ENCODE measurements at regions of chr15 and their contacts with region 1.

Region 1: GRCh38 chr15:91706322-91707032 is 147.0 kb upstream of the SLCO3A1 start:
- DNase-seq: peak; percentile 63 to 79
- ATAC-seq: peak; percentile 75 to 92; a peak in 5 of 6 replicates
- H3K4me3 ChIP-seq: no peak overlapping the region
- H3K27ac ChIP-seq: no peak overlapping the region
- H3K4me1 ChIP-seq: no peaks in the 10 kb centered on the region
- CTCF ChIP-seq: peak; percentile 59
- EP300 ChIP-seq: no peak
- POLR2A ChIP-seq: no peak
- RAD21 ChIP-seq: peak; percentile 56 to 74; a peak in 4 of 5 replicates

Region 2: DNA sequence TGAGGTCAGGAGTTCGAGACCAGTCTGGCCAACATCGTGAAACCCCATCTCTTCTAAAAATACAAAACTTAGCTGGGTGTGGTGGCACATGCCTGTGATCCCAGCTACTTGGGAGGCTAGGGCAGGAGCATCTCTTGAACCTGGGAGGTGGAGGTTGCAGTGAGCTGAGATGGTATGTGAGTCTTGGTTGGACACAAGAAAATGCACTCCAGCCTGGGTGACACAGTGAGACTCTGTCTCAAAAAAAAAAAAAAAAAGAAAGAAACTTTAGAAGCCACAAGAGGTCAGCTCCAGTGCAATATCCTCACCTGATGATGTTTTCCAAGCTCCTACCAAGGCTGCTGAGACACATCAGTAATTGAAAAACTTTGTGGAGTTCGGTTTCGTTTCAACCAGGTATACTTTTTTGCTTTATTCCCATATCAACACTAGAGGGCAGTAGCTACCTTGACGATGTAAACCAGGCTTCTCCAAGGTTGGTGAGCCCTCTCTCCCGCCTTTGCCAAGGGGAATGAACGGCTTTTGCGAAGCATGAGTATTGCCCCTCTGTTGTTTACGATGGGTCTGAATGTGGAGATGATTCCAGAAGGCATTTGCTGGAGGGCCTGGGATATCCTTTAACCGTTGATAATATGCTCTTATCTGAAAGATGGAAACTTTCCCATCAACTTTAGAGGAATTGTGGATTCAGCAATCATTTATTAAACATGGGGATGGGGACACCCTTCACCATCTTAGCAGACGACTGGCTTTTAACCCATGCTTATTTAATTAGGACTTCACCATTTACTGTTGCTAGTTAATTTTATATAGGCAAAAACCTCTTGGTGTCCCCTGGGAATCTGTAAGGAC is 403.7 kb before region 1 on chr15:
- CTCF ChIA-PET with region 1: interaction called, 17 read pairs
- POLR2A ChIA-PET with region 1: no interaction called
- DNase-seq: peak; percentile 71 to 80
- ATAC-seq: peak; percentile 75 to 95; a peak in 5 of 6 replicates
- H3K4me3 ChIP-seq: no peak overlapping the region
- H3K27ac ChIP-seq: no peak overlapping the region
- H3K4me1 ChIP-seq: no peaks in the 10 kb centered on the region
- CTCF ChIP-seq: peak; percentile 94
- EP300 ChIP-seq: no peak
- POLR2A ChIP-seq: no peak
- RAD21 ChIP-seq: peak; percentile 95 to 96

Region 3: GRCh38 chr15:91670108-91670507 is 36.4 kb before region 1 on chr15:
- CTCF ChIA-PET with region 1: interaction called, 13 read pairs
- POLR2A ChIA-PET with region 1: no interaction called
- DNase-seq: no peak
- ATAC-seq: no peak
- H3K4me3 ChIP-seq: no peak overlapping the region
- H3K27ac ChIP-seq: no peak overlapping the region
- H3K4me1 ChIP-seq: no peaks in the 10 kb centered on the region
- CTCF ChIP-seq: no peak
- EP300 ChIP-seq: no peak
- POLR2A ChIP-seq: no peak
- RAD21 ChIP-seq: no peak

Region 4: GRCh38 chr15:91694831-91695210 is 11.7 kb before region 1 on chr15:
- CTCF ChIA-PET with region 1: interaction called, 40 read pairs
- POLR2A ChIA-PET with region 1: no interaction called
- DNase-seq: peak in 1 of 2 experiments; percentile 15
- ATAC-seq: peak in 1 of 2 experiments; percentile 42; a peak in 1 of 6 replicates
- H3K4me3 ChIP-seq: no peak overlapping the region
- H3K27ac ChIP-seq: no peak overlapping the region
- H3K4me1 ChIP-seq: no peaks in the 10 kb centered on the region
- CTCF ChIP-seq: no peak
- EP300 ChIP-seq: 0 out of 5 replicates have a peak, but pooled peaks of 1 of the 2 experiments have one; percentile 6
- POLR2A ChIP-seq: no peak
- RAD21 ChIP-seq: no peak

Region 5: DNA sequence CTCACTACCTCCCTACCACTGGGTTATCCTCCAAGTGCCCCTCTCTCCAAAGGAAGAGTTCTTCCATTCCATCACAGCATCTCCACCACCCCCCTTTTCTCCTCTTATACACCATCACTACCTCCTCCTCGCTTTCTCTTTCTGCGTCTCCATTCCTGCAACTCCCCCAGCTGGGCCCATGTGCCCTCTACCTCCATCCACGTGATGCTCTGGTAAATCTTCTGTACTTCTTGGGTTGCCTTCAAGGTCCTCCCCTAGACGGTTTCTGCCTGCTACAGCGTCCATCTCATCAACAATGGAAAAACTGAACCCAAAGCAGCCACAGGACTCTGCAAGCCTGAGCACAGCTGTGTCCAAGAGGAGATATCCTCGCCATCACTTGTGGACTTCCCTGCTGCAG is 17.5 kb after region 1 on chr15:
- CTCF ChIA-PET with region 1: interaction called, 18 read pairs
- POLR2A ChIA-PET with region 1: no interaction called
- DNase-seq: no peak
- ATAC-seq: no peak
- H3K4me3 ChIP-seq: no peak overlapping the region
- H3K27ac ChIP-seq: no peak overlapping the region
- H3K4me1 ChIP-seq: no peaks in the 10 kb centered on the region
- CTCF ChIP-seq: no peak
- EP300 ChIP-seq: no peak
- POLR2A ChIP-seq: no peak
- RAD21 ChIP-seq: no peak

Region 6: GRCh38 chr15:91981821-91982801 is 275.6 kb after region 1 on chr15:
- CTCF ChIA-PET with region 1: interaction called, 19 read pairs
- POLR2A ChIA-PET with region 1: no interaction called
- DNase-seq: peak in 1 of 2 experiments; percentile 17
- ATAC-seq: peak; percentile 62 to 72; a peak in 4 of 6 replicates
- H3K4me3 ChIP-seq: no peak overlapping the region
- H3K27ac ChIP-seq: no peak overlapping the region
- H3K4me1 ChIP-seq: no peaks in the 10 kb centered on the region
- CTCF ChIP-seq: peak; percentile 49
- EP300 ChIP-seq: no peak
- POLR2A ChIP-seq: no peak
- RAD21 ChIP-seq: peak; percentile 66 to 70

Measured in A549 (cell line).